Heart right ventricle (tissue), 16 donors: ENCODE measurements at regions of chr17 and their contacts with region 1.

Region 1: DNA sequence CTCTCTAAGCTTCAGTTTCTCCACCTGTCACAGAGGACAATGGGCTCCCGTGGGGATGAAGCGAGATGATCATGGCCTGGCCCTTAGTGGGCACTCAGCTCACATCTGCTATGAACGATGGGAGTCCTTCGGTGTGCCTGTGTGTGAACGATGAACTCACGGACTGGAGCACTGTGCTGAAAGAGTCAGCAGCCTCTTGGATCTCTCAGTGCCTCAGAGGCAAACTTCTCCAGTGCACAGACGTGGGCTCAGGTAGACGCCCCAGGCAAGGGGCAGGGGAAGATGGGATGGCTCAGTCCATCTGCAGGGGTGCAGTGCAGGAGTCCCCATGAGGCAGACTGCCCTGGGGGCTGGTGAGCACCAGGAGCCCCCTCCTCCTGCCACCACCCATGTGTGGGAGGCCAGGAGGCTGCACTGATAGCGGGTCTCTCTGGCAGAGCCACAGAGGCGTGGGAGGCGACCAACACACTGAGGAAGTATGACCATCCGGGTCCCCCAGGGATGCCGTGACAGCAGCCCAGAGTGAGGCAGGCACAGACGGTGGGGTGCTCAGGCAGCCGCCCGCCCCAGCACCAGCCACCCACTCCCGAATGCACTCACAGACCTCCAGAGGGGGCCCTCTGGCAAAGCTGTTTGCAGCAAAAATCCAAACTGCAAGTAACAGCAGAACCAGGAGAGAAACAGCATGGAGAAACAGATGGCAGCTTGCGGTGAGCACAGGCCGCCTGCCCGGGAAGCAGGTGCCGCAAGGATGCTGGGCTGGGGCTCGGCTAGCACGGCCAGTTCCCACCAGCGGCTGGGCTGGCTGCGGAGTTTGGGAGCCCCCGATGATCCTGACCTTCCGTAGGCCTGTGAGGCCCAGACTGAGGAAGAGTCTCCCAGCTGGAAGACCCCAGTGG is 82.7 kb downstream of the RPH3AL start:
- DNase-seq: no peak
- ATAC-seq: peak in 1 of 8 donors; percentile 33
- H3K4me3 ChIP-seq: no peak overlapping the region
- H3K27ac ChIP-seq: no peak overlapping the region
- H3K4me1 ChIP-seq: peaks cover 11 to 33% (median 18%) of the 10 kb centered on the region in 9 donors
- H3K27me3 ChIP-seq: peaks cover 0 to 3% (median 0%) of the 10 kb centered on the region in 7 donors
- CTCF ChIP-seq: no peak

Region 2: DNA sequence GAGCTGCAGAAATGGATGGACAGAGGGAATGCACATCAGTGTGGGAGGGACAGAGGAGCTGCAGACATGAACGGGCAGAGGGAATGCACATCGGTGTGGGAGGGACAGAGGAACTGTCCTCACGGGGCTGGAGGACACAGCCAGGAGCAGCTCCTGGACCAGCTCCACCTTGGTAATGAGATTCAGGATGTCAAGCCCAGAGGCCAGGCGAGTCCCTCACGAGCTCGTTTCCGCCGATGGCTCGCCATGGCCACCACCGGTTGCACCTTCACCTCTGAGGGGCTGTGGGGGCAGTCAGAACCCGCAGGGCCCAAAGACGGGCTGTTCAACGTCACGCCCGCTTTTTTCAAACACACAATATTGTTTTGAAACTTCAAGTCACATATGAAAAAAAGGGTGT is 26.5 kb after region 1 on chr17:
- intact Hi-C with region 1: loop called in 1 of 10 experiments (anchors 2 kb)
- DNase-seq: no peak
- ATAC-seq: no peak
- H3K4me3 ChIP-seq: no peak overlapping the region
- H3K27ac ChIP-seq: no peak overlapping the region
- H3K4me1 ChIP-seq: peaks cover 0 to 17% (median 6%) of the 10 kb centered on the region in 9 donors
- H3K27me3 ChIP-seq: peaks cover 0 to 25% (median 10%) of the 10 kb centered on the region in 7 donors
- CTCF ChIP-seq: no peak

Region 3: GRCh38 chr17:320809-321653 is 51.2 kb after region 1 on chr17:
- intact Hi-C with region 1: no loop called
- DNase-seq: no peak
- ATAC-seq: peak in 5 of 8 donors; percentile 8 to 42 (median 21)
- H3K4me3 ChIP-seq: no peak overlapping the region
- H3K27ac ChIP-seq: no peak overlapping the region
- H3K4me1 ChIP-seq: peaks cover 0 to 9% (median 0%) of the 10 kb centered on the region in 9 donors
- H3K27me3 ChIP-seq: peaks cover 0 to 22% (median 8%) of the 10 kb centered on the region in 7 donors
- CTCF ChIP-seq: no peak

Region 4: GRCh38 chr17:511001-511698 is 241.3 kb after region 1 on chr17:
- intact Hi-C with region 1: no loop called
- DNase-seq: no peak
- ATAC-seq: peak in 5 of 8 donors; percentile 34 to 68 (median 44)
- H3K4me3 ChIP-seq: peak overlapping the region in 1 of 10 donors; percentile 9
- H3K27ac ChIP-seq: peak overlapping the region in 6 of 10 donors; percentile 2 to 57 (median 39)
- H3K4me1 ChIP-seq: peaks cover 10 to 44% (median 32%) of the 10 kb centered on the region in 9 donors
- H3K27me3 ChIP-seq: no peaks in the 10 kb centered on the region
- CTCF ChIP-seq: no peak